ENCODE measurements at regions of chr7 and their contacts with region 1.

Region 1: GRCh38 chr7:131302876-131303707 is 24.6 kb upstream of the MKLN1 start:
- DNase-seq: peak; percentile 50
- ATAC-seq: peak; percentile 47 to 52

Region 2: GRCh38 chr7:131068604-131069021 is 234.5 kb before region 1 on chr7:
- intact Hi-C with region 1: loop called in 1 of 2 experiments (anchors 5 kb)
- DNase-seq: no peak
- ATAC-seq: no peak

Region 3: GRCh38 chr7:131107337-131108211 is 195.5 kb before region 1 on chr7:
- intact Hi-C with region 1: loop called (anchors 2 to 10 kb)
- DNase-seq: peak; percentile 76
- ATAC-seq: peak; percentile 45 to 46

Region 4: DNA sequence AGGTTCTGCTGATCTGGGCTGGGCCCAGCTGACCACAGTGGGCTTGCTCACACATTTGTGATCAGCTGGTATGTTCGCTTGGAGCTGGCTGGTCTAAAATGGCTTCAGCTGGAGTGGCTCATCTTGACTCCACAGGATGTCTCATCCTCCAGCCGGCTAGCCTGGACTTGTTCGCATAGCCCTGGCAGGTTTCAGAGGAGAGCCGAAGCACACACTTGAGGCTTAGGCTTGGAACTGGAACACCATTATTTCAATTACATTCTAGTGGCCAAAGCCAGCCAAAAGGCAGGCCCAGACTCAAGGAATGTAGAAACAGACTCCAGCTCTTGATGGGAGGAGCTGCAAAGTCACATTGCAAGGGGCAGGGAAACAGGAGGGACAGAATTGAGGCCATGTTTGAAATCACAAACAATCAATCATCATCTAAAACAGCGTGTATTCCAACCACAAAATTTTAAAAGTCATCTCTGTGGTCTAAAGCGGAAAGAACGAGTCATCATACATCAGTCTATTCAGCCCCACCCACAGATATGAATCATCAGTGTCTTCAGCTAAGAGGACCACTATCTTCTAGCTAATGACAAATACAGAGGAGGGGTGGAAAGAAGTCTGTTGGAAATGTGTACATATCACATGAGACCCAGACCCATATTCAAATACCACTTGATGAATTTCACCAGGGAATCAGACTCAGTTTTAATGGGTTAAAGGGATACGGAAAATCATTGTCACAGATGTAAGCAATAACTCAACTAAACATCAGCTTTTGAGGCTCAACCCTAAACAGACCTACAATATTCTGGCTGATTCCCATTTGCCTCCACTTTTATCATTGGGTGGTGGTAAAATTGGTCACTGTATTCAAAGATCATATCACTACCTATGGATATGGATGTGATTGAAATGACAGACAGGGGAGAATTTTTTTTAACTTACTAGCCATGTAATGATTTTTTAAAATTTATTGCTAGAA is 114.4 kb before region 1 on chr7:
- intact Hi-C with region 1: loop called in 1 of 2 experiments (anchors 5 kb)
- DNase-seq: peak; percentile 25
- ATAC-seq: peak; percentile 47 to 72

Region 5: DNA sequence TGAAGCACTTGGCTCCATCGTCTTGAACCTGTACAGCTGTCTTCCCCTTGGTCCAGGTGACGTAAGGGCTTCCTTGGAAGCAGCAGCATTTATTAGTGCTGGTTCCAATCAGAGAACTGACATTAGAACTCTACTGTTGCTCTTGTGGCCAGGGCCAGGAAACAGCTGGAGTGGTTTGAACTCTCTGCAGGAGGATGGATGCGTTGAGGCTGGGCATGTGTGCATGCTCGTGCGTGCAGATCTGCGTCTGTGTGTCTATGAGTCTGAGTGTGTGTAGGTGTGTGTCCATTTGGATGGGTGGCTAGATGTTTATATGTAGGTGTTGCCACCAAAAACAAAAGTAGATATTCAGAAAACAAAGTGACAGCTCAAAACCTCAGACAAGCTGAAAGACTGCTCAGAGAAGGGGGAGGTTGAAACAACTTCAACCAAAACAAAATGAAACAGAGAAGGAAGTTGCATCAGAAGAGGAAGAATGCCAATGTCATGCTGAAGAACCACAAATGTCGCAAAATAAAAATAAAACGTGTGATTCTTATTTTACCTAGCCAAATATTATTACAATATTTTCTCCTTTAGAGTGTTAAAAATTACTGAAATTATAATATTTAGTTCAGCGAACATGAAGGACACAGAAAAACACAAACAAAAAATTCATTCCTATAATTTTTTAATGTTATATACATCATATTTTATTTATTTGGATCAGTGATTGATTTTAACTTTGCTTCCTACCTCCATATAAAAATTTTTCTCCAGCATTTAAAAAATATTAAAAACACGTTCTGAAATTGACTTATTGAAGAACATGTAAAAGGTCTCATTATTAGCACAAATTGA is 71.5 kb before region 1 on chr7:
- intact Hi-C with region 1: no loop called
- DNase-seq: peak; percentile 33
- ATAC-seq: peak; percentile 68 to 86

Region 6: DNA sequence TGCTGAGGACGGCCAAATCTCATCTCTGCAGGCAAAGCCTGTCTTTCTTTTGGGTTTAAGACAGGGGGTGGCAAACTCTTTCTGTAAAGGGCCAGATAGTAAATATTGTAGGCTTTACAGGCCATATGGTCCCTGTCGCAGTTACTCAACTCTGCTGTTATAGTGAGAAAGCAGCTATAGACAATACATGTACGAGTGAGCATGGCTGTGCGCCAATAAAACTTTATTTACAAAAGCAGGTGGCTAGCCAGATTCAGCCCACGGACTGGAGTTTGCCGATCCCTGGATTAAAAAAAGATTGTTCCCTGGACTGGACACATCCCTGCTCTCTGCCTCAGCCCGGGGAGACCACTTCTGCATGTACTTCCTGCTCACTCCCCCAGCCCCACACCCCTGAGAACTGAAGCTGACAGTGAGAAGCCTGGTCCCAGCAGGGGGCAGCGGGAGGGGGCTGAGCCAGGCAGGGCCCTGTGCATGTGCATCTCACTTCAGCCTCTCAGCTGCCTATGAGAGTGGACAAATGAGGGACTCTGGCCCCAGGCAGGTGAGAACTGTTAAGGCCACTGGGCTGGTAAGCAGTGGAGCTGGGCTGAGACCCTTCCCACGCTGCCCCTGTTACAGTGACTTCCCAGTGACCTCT is 880.8 kb after region 1 on chr7:
- intact Hi-C with region 1: no loop called
- DNase-seq: no peak
- ATAC-seq: no peak

Region 7: GRCh38 chr7:132343199-132343598 is 1040.1 kb after region 1 on chr7:
- intact Hi-C with region 1: no loop called
- DNase-seq: no peak
- ATAC-seq: peak; percentile 84 to 90